Activated CD4-positive, alpha-beta T cell treated with anti-CD3 and anti-CD28 coated beads, Interleukin-2, amount 10 ng/mL, durations not matched to agents 24 days and 14 days (primary cell): ENCODE measurements at regions of chr4 and their contacts with region 1.

Region 1: GRCh38 chr4:184335520-184335919 is 117.8 kb upstream of the ENPP6 start:
- DNase-seq: no peak
- H3K4me3 Mint-ChIP-seq: no peak overlapping the region
- H3K27ac Mint-ChIP-seq: peak overlapping the region; percentile 72
- H3K4me1 Mint-ChIP-seq: peaks cover 17% of the 10 kb centered on the region
- H3K27me3 Mint-ChIP-seq: no peaks in the 10 kb centered on the region

Region 2: GRCh38 chr4:184287697-184288255 is 47.7 kb before region 1 on chr4:
- intact Hi-C with region 1: loop called (anchors 2 kb)
- DNase-seq: peak; percentile 64
- H3K4me3 Mint-ChIP-seq: peak overlapping the region; percentile 57
- H3K27ac Mint-ChIP-seq: peak overlapping the region; percentile 89
- H3K4me1 Mint-ChIP-seq: peaks cover 45% of the 10 kb centered on the region
- H3K27me3 Mint-ChIP-seq: no peaks in the 10 kb centered on the region

Region 3: GRCh38 chr4:184318852-184319251 is 16.7 kb before region 1 on chr4:
- intact Hi-C with region 1: loop called (anchors 2 kb)
- DNase-seq: peak; percentile 56
- H3K4me3 Mint-ChIP-seq: peak overlapping the region; percentile 21
- H3K27ac Mint-ChIP-seq: peak overlapping the region; percentile 93
- H3K4me1 Mint-ChIP-seq: peaks cover 50% of the 10 kb centered on the region
- H3K27me3 Mint-ChIP-seq: no peaks in the 10 kb centered on the region

Region 4: DNA sequence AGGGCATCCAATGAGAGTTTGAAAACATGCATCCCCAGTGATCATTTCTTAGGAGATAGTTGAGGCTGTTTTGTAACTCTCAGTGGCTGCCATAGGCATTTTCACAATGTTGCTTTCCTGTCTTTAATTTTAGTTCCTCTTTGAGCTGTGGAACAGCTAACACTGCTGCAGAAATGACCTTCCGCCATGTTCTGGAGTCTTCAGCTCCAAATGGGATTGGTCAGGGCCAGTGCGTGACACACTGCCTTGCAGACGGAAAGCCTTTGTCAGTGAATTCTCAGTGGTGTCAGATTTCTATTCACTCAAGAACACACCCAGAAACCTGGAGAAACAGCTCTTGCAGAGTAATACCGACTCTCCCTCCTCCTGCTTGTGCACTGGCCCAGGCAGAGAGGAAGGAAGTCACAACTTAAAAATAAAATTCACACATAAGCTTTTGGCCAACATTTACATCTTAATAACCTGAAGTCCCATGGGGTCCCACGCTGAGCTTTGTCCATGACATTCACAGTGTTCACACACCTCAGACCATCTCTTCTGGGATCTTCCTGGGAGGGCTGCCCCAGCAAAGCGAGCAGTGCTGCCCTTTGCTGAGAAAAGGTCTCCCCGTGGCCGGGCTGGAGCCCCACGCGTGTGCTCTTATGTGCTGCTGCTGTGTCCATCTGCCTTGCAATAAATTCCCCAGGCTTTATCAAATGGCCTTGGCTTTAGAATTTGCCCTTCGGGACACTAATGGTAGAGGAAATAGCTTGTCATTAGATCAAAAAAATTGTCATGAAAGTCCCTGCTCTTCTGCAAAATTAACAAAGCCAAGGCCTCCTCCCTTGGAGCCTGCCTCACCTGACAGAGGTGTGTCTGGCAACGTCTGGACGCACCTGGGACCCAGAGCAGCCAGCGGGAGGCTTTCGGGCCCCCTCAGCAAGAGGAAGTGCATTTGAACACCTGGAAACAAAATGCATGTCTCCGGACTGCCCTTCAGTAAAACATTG is 12.0 kb after region 1 on chr4:
- intact Hi-C with region 1: no loop called
- DNase-seq: no peak
- H3K4me3 Mint-ChIP-seq: no peak overlapping the region
- H3K27ac Mint-ChIP-seq: no peak overlapping the region
- H3K4me1 Mint-ChIP-seq: peaks cover 28% of the 10 kb centered on the region
- H3K27me3 Mint-ChIP-seq: no peaks in the 10 kb centered on the region

Region 5: GRCh38 chr4:184362396-184362795 is 26.9 kb after region 1 on chr4:
- intact Hi-C with region 1: loop called (anchors 2 kb)
- DNase-seq: no peak
- H3K4me3 Mint-ChIP-seq: no peak overlapping the region
- H3K27ac Mint-ChIP-seq: peak overlapping the region; percentile 7
- H3K4me1 Mint-ChIP-seq: peaks cover 18% of the 10 kb centered on the region
- H3K27me3 Mint-ChIP-seq: no peaks in the 10 kb centered on the region

Region 6: DNA sequence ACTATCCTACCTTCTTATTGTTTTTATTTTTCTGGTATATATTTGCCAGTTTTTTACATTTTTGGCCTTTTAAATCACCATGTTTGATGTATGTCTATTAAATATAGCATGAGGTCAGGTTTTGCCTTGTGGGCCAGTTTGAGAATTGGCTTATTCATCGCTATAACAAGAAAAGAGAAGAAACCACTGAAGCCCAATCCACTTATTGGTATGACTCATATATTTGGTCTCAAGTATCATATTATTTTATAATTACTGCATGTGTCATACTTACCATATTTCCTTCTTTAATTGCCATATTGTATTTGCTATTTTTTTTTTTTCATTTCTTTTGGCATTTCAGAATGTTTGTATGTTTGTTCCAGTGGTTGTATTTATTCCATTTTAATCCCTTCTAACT is 39.5 kb after region 1 on chr4:
- intact Hi-C with region 1: loop called (anchors 5 kb)
- DNase-seq: no peak
- H3K4me3 Mint-ChIP-seq: no peak overlapping the region
- H3K27ac Mint-ChIP-seq: no peak overlapping the region
- H3K4me1 Mint-ChIP-seq: peaks cover 17% of the 10 kb centered on the region
- H3K27me3 Mint-ChIP-seq: no peaks in the 10 kb centered on the region